Dendritic cell treated with granulocyte-macrophage colony-stimulating factor and Interleukin-4, amounts not matched to agents 40 ng/mL and 50 ng/mL, for 4 days (primary cell): ENCODE measurements at regions of chr19 and their contacts with region 1.

Region 1: GRCh38 chr19:38402967-38403861 is at the start of gene FAM98C:
- H3K4me3 Mint-ChIP-seq: peak within 1 kb of the TSS; percentile 84
- H3K27ac Mint-ChIP-seq: peak within 1 kb of the TSS; percentile 87
- H3K4me1 Mint-ChIP-seq: peaks cover 24% of the 10 kb centered on the region
- H3K27me3 Mint-ChIP-seq: peaks cover 24% of the 10 kb centered on the region

Region 2: DNA sequence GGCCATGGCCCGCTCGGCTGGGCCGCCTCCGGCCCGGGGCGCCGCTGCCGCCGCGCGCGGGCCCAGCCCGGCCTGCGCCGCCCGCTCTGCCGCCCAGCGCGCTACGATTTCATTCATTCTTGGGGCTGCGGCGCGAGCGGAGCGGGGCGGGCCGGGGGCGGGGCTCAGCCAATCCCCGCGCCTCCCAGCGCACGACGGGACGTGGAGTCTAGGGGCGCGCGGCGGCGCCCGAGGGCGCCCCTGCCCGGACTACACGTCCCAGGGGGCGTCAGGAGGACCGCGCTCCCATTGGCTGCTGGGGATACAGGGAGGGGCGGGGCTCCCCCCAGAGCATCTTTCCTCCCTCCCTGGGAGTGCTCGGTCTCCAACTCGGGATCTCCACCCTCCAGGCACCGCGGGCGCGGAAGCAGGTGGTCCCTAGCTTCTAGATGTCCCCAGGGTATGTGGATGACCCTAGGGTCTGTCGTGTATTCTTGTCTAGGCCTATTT is 173.6 kb before region 1 on chr19:
- intact Hi-C with region 1: loop called (anchors 5 kb)
- H3K4me3 Mint-ChIP-seq: no peak overlapping the region
- H3K27ac Mint-ChIP-seq: no peak overlapping the region
- H3K4me1 Mint-ChIP-seq: peaks cover 17% of the 10 kb centered on the region
- H3K27me3 Mint-ChIP-seq: peaks cover 75% of the 10 kb centered on the region

Region 3: DNA sequence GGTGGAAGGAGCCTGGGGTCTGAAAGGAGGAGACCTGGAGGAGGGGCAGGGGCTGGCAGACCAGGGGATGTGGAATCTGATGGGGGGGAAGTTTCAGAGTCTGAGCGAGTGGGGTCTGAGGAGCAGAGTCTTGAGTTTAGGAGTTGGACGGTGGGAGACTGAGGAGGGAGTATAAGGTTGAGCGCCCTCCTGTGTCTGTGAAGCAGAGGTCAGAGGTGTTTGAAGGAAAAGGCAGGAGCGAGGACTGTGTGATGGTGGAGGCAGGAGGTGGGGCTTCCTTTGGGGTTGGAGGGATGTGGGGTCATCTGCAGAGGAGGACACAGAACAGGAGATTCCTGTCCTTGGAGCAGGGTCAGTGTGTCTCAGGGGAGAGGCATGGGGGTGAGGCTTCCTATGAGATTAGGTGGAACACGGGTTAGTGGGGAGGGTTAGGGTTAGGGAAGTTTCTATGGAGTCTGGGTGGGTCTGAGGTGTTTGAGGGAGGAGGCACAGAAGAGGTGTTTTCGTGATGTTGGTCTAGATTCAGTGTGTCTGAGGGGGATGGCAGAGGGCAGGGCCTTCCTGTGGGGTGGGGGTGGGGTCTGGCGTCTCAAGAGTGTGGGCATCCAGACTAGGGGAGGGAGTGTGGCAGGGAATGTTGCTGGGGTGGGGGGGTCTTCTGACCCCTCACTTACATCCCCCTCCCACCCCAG is 38.6 kb after region 1 on chr19:
- intact Hi-C with region 1: loop called (anchors 5 kb)
- H3K4me3 Mint-ChIP-seq: no peak overlapping the region
- H3K27ac Mint-ChIP-seq: peak overlapping the region; percentile 12
- H3K4me1 Mint-ChIP-seq: peaks cover 8% of the 10 kb centered on the region
- H3K27me3 Mint-ChIP-seq: peaks cover 18% of the 10 kb centered on the region

Region 4: GRCh38 chr19:38514812-38515633 is 111.8 kb after region 1 on chr19:
- intact Hi-C with region 1: loop called (anchors 2 kb)
- H3K4me3 Mint-ChIP-seq: no peak overlapping the region
- H3K27ac Mint-ChIP-seq: no peak overlapping the region
- H3K4me1 Mint-ChIP-seq: peaks cover 5% of the 10 kb centered on the region
- H3K27me3 Mint-ChIP-seq: peaks cover 24% of the 10 kb centered on the region

Region 5: GRCh38 chr19:38559428-38560401 is 156.5 kb after region 1 on chr19:
- intact Hi-C with region 1: no loop called
- H3K4me3 Mint-ChIP-seq: no peak overlapping the region
- H3K27ac Mint-ChIP-seq: no peak overlapping the region
- H3K4me1 Mint-ChIP-seq: peaks cover 44% of the 10 kb centered on the region
- H3K27me3 Mint-ChIP-seq: peaks cover 25% of the 10 kb centered on the region

Region 6: GRCh38 chr19:38929929-38930775 is 526.9 kb after region 1 on chr19 and contains the start of gene SARS2:
- intact Hi-C with region 1: loop called (anchors 5 kb)
- H3K4me3 Mint-ChIP-seq: peak within 1 kb of the TSS; percentile 91
- H3K27ac Mint-ChIP-seq: peak within 1 kb of the TSS; percentile 94
- H3K4me1 Mint-ChIP-seq: peaks cover 39% of the 10 kb centered on the region
- H3K27me3 Mint-ChIP-seq: no peaks in the 10 kb centered on the region